Activated T-helper 1 cell treated with anti-CD3 and anti-CD28 coated beads, Interleukin-12 subunit alpha, Interleukin-12 subunit beta, Interleukin-2, Interleukin-4 antibody, amounts not matched to agents 30 ng/mL and 10 ng/mL and 1 ng/mL, durations not matched to agents 14 hours and 24 hours and 36 hours (primary cell): ENCODE measurements at regions of chr10 and their contacts with region 1.

Region 1: GRCh38 chr10:79195091-79195923 is 126.5 kb downstream of the ZMIZ1 start:
- DNase-seq: peak; percentile 67
- H3K4me3 Mint-ChIP-seq: no peak overlapping the region
- H3K27ac Mint-ChIP-seq: no peak overlapping the region
- H3K4me1 Mint-ChIP-seq: peaks cover 6% of the 10 kb centered on the region
- H3K27me3 Mint-ChIP-seq: peaks cover 3% of the 10 kb centered on the region

Region 2: GRCh38 chr10:78029269-78030226 is 1165.8 kb before region 1 on chr10 and contains the start of gene POLR3A:
- intact Hi-C with region 1: loop called (anchors 1 kb)
- DNase-seq: peak; percentile 89
- H3K4me3 Mint-ChIP-seq: peak within 1 kb of the TSS; percentile 99
- H3K27ac Mint-ChIP-seq: peak within 1 kb of the TSS; percentile 91
- H3K4me1 Mint-ChIP-seq: peaks cover 28% of the 10 kb centered on the region
- H3K27me3 Mint-ChIP-seq: no peaks in the 10 kb centered on the region
- total RNA-seq, gene POLR3A: 29.5 and 30.8 TPM in 2 replicates

Region 3: DNA sequence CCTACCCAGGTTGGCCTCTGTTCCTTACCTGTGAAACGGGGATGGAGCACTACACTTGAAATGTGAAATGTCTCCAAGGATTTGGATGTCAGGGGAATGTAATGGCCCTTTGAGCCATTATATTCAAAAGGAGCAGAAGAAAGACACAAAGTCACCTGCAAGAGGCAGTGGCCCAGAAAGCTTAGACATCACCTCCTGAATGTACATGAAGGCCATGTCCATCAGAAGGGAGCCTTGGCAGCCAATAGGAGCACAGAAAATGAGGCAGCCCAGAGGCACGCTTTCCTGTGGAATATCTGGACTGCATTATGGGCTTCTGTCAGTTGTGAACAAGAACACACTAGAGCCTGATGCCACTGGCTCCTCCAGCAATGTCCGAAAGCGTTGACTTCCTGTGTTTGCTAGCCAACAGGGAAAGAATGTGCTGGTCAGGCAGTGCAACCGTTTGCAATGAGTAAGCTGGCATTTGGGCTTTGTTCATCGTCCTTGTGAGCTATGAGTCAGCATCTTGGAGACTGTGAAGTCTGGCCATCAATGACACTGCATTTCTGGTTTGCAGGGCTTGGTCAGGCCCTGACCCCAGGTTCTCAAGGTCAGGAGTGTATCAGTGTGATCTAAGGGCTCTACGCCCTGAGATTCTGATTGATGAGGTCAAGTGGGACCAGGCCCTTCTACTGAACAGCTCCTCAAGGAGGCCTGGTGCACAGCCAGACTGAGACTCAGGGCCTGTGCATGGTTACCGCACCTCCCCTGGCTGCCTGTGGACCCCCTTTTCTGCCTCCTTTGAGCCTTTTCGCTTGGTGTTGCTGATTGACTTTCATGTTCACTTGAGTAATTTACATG is 939.3 kb before region 1 on chr10:
- intact Hi-C with region 1: loop called (anchors 5 kb)
- DNase-seq: no peak
- H3K4me3 Mint-ChIP-seq: no peak overlapping the region
- H3K27ac Mint-ChIP-seq: no peak overlapping the region
- H3K4me1 Mint-ChIP-seq: no peaks in the 10 kb centered on the region
- H3K27me3 Mint-ChIP-seq: peaks cover 3% of the 10 kb centered on the region

Region 4: GRCh38 chr10:78520737-78521430 is 674.4 kb before region 1 on chr10:
- intact Hi-C with region 1: loop called (anchors 10 kb)
- DNase-seq: no peak
- H3K4me3 Mint-ChIP-seq: no peak overlapping the region
- H3K27ac Mint-ChIP-seq: no peak overlapping the region
- H3K4me1 Mint-ChIP-seq: peaks cover 7% of the 10 kb centered on the region
- H3K27me3 Mint-ChIP-seq: peaks cover 5% of the 10 kb centered on the region

Region 5: GRCh38 chr10:78852466-78853240 is 342.7 kb before region 1 on chr10:
- intact Hi-C with region 1: loop called (anchors 1 kb)
- DNase-seq: no peak
- H3K4me3 Mint-ChIP-seq: no peak overlapping the region
- H3K27ac Mint-ChIP-seq: no peak overlapping the region
- H3K4me1 Mint-ChIP-seq: no peaks in the 10 kb centered on the region
- H3K27me3 Mint-ChIP-seq: no peaks in the 10 kb centered on the region